ENCODE measurements at regions of chrX and their contacts with region 1.

Region 1: DNA sequence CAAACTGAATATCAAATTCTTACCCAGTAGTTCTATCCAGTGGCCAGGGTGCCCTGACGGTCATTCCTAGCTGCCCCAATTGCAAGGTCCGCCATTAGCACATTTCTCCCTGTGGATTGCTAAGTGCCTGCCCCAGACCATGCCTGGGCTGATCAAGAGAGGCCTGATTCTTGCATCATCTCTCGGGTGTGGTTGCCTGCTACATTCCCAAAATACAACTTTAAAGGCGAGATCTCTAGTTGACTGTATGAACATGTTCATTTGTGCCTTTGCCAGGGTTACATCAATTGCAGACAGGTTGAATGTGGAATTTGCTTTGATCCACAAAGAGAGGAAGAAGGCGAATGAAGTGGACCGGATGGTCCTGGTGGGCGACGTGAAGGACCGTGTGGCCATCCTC is 28.0 kb downstream of the PRPS2 start:
- DNase-seq: no peak
- ATAC-seq: no peak

Region 2: DNA sequence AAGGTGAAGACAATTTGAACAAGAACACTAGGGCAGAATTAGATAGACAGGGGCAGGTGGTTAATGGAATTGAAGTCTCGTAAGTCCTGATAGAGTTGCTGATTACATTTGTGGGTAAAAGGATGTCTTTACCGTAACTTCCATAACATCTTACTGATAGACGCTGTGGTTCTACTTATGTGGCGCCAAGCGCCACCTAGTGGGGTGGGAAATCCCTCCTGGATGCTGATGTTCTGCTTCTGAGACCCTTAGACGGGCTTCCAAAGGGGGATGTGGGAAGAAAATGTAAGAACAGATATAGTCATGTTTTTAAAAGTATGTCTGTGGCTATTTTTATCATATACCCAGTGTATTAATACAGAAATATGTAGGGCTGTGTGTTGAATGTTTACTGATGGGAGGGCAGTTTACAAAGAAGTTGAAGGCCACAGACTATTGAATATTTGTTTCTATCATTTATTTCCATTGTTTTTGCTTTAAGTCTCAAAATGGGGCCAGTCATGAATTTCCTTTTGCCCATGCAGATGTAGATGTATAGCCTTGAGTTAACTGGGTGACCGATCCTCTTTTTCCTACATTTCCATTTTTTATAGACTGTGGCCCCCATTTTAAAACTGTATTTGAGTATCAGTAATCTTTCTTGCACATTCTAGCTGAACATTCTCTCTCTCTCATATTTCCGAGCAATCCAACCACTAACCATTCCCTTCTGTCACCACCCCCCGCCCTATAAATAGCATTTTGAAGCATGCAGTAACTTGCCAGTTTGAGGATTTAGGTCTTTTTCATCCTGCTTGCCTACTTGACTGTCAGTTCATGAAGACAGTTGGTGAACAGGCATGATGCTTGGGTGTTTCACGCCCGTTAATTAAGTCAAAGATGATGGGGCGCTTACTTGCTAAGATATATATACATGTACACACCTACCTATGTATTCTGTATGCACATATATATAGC is 75.1 kb after region 1 on chrX:
- intact Hi-C with region 1: loop called in 1 of 2 experiments (anchors 5 kb)
- DNase-seq: peak in 1 of 2 donors; percentile 66
- ATAC-seq: peak; percentile 59

Measured in left colon (tissue), 2 donors.